Common myeloid progenitor, CD34-positive (primary cell): ENCODE measurements at regions of chr1 and their contacts with region 1.

Region 1: DNA sequence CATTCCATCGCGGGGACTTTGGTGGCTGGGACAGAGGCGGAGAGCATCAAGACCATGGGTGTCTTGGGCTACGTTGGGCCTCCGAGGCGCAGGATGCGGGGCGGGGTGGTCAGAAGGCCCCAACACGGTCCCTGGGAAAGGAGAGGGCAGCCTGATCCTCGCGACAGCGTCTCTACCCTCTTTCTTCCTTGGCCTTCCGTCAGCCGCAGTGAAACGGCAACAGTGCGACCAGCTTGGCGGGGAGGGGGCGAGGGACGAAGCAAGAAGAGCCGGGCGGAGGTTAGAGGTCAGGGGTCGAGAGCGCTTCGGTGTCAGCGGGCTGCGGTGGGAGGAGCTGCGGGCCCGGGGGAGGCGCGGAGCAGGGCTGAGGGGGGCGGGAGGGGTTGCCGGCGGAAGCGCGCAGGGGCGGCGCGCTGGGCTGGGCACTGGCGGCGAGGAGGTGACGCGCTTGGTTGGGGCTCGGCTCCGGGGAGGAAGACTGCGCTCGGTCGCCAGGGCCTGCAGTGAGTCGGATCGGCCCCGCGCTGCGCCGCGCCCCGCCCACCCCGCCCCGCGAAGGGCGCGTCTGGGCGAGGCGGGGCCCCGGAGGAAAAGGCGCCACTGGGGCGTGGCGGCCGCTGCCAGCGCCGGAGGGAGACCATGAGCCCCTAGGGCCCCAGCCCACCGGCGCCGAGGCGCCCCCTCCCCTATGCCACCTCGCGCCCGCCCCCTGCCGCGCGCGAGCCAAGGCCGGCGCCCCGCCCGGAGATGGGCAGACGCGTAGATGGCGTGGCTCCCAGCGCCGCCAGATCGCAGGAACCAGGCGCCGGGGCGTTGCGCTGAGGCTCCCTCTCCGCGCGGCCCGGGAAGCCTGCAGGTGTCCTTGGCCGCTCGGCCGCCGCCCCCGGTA is at the start of gene KCNC4:
- DNase-seq: peak; percentile 89 to 94 (median 93)
- H3K4me3 ChIP-seq: peak within 1 kb of the TSS; percentile 55 to 79 (median 67)
- H3K27ac ChIP-seq: peak within 1 kb of the TSS in 1 of 2 experiments; percentile 77
- H3K4me1 ChIP-seq: peaks cover 0 to 31% (median 23%) of the 10 kb centered on the region in 4 experiments
- H3K27me3 ChIP-seq: peaks cover 0 to 21% (median 19%) of the 10 kb centered on the region in 5 experiments

Region 2: GRCh38 chr1:109984456-109985275 is 225.3 kb before region 1 on chr1 and contains the start of gene AHCYL1:
- CTCF ChIA-PET with region 1: no interaction called
- POLR2A ChIA-PET with region 1: no interaction called
- DNase-seq: peak; percentile 98 to 99 (median 98)
- H3K4me3 ChIP-seq: peak within 1 kb of the TSS; percentile 76 to 90 (median 81)
- H3K27ac ChIP-seq: peak within 1 kb of the TSS; percentile 84 to 91
- H3K4me1 ChIP-seq: peaks cover 9 to 33% (median 17%) of the 10 kb centered on the region in 4 experiments
- H3K27me3 ChIP-seq: no peaks in the 10 kb centered on the region

Region 3: DNA sequence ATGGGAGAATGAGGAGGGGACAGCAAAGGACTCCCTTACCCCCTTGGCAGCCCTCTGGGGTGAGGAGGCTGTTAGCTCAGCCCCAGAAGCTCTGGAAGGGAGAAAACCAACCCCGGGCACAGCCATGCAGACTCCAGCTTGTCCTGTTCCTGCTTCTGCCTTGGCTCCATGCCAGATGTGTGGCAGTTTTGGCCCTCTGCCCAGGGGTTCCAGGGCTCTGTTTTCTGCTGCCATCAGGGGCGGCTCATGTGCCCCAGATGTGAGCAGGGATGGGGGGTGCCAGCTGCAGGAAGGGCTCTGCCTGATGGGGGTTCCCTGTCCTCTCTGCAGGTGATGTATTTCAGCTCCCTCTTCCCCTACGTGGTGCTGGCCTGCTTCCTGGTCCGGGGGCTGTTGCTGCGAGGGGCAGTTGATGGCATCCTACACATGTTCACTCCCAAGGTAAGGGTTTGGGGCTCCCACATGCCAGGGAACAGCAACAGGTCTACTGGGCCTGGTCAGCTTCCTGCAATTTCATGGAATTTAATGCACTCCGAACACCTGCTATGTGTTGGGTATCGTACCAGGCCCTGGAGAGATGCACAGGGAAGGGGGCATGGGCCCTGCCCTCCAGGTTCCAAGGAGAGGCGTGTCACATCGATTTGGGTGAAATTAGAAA is 33.5 kb before region 1 on chr1:
- CTCF ChIA-PET with region 1: no interaction called
- POLR2A ChIA-PET with region 1: no interaction called
- DNase-seq: peak; percentile 47 to 79 (median 78)
- H3K4me3 ChIP-seq: no peak overlapping the region
- H3K27ac ChIP-seq: no peak overlapping the region
- H3K4me1 ChIP-seq: peaks cover 0 to 10% (median 4%) of the 10 kb centered on the region in 4 experiments
- H3K27me3 ChIP-seq: peaks cover 0 to 7% (median 3%) of the 10 kb centered on the region in 5 experiments

Region 4: GRCh38 chr1:110196917-110197765 is 12.8 kb before region 1 on chr1:
- CTCF ChIA-PET with region 1: interaction called, 20 read pairs
- POLR2A ChIA-PET with region 1: no interaction called
- DNase-seq: peak; percentile 57 to 76 (median 76)
- H3K4me3 ChIP-seq: no peak overlapping the region
- H3K27ac ChIP-seq: no peak overlapping the region
- H3K4me1 ChIP-seq: no peaks in the 10 kb centered on the region
- H3K27me3 ChIP-seq: peaks cover 0 to 4% (median 0%) of the 10 kb centered on the region in 5 experiments

Region 5: DNA sequence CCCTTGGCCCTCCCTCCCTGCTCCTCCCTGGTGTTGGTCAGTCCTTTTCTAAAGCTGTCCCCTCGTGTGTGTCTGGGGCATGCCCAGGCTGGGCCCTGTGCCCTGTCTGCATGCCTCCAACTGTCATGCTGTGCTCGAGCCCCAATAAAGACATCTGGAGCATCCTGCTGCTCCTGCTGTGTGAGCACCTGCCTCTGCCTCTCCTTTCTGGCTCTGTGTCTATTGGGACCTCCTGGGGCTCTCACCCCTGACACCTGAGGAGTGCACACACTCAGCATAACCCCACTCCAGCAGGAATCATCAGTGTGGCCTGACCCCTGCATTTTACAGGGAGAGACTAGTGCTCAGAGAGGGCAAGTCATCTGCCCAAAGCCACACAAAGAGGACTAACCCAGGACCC is 23.9 kb after region 1 on chr1:
- CTCF ChIA-PET with region 1: no interaction called
- POLR2A ChIA-PET with region 1: no interaction called
- DNase-seq: no peak
- H3K4me3 ChIP-seq: no peak overlapping the region
- H3K27ac ChIP-seq: no peak overlapping the region
- H3K4me1 ChIP-seq: peaks cover 0 to 8% (median 0%) of the 10 kb centered on the region in 4 experiments
- H3K27me3 ChIP-seq: no peaks in the 10 kb centered on the region

Region 6: DNA sequence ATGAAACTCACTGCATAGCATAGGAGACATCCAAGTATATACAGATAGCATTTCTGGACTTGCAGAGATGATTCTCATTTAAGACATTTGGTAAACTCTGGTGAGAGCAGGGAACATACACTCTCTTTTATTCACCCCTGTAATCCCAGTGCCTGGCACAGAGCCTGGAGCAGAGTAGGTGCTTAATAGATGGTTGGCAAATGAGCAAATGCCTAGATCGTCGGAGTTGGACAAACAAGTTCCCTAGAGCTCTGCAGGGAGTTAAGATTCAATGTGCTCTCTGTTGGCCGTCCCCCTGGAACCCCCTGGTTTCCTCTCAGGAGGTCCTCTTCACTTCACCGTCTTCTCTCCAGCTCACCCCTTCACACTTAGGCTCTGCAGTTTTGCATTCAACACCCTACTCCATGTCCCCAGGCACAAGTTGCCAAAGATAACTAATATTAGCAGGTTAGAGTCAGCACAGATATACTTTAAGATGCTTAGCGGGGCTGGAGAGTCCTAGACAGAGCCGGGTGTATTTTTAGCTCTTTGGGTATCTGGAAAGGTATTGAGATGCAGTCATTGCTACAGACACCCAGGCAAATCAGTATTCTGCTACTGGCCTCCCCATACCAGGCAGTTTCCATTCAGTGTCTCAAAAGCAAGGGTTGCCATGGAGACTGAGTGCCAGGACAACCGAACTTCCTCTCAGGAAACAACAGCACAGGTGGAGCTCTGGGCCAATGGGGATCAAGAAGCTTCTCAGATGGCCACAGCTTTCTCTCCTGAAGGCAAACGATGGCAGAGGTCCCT is 45.2 kb after region 1 on chr1:
- CTCF ChIA-PET with region 1: interaction called, 24 read pairs
- POLR2A ChIA-PET with region 1: no interaction called
- DNase-seq: peak; percentile 48 to 88 (median 84)
- H3K4me3 ChIP-seq: no peak overlapping the region
- H3K27ac ChIP-seq: no peak overlapping the region
- H3K4me1 ChIP-seq: peaks cover 0 to 16% (median 12%) of the 10 kb centered on the region in 4 experiments
- H3K27me3 ChIP-seq: no peaks in the 10 kb centered on the region

Region 7: DNA sequence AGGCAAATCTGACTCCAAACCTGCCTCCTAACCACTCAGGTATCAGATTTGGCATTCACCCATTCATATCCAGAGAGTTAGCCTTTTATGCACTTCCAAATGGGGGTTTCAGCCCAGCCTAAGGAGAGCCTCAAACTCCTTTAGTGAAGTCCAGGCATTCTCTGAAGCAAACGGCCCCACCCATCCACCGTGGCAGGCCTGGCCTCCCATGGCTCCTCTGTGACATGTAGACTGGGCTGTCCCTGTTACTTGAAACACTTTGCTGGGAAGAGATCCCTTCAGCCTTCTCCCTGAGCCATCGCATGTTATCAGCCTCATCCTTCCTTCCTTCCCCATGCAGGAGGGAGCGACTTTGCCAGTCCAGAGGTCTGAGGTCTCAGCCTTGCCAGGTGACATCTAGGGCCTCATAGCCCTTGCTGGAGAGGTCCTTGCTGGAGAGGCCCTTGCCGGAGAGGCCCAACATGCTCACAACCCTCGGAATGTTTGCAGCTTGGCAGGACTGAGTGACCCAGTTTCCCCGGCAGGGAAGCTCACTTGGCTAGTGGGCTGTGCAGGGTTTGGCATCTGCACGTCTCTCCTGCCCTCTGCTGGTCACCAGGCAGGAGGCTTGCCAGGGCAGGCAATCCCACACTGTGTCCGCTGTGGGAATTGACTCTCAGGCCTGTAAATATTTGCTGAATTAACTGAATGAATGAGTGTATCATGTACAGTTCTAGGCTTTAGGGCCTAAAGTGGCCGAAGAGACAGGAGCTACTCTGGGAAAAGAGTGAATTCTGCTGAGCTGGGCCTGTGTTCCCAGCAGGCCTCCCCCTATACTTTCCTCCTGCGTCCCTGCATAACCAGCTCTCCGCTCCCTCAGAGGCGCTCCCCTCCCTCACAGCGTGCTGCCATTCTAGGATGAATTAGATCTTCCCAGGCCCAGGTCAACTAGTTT is 102.5 kb after region 1 on chr1:
- CTCF ChIA-PET with region 1: interaction called, 457 read pairs
- POLR2A ChIA-PET with region 1: interaction called, 5 read pairs
- DNase-seq: peak; percentile 77 to 89 (median 84)
- H3K4me3 ChIP-seq: no peak overlapping the region
- H3K27ac ChIP-seq: no peak overlapping the region
- H3K4me1 ChIP-seq: peaks cover 0 to 3% (median 0%) of the 10 kb centered on the region in 4 experiments
- H3K27me3 ChIP-seq: peaks cover 0 to 2% (median 0%) of the 10 kb centered on the region in 5 experiments

Region 8: GRCh38 chr1:110407260-110408210 is 197.6 kb after region 1 on chr1 and contains the start of gene LAMTOR5:
- CTCF ChIA-PET with region 1: interaction called, 19 read pairs
- POLR2A ChIA-PET with region 1: no interaction called
- DNase-seq: peak; percentile 95 to 97 (median 97)
- H3K4me3 ChIP-seq: peak within 1 kb of the TSS; percentile 84 to 98 (median 93)
- H3K27ac ChIP-seq: peak within 1 kb of the TSS; percentile 89 to 94
- H3K4me1 ChIP-seq: peaks cover 12 to 22% (median 14%) of the 10 kb centered on the region in 4 experiments
- H3K27me3 ChIP-seq: no peaks in the 10 kb centered on the region

Region 9: GRCh38 chr1:110460253-110461220 is 250.6 kb after region 1 on chr1:
- CTCF ChIA-PET with region 1: interaction called, 118 read pairs
- POLR2A ChIA-PET with region 1: no interaction called
- DNase-seq: peak; percentile 78 to 91 (median 86)
- H3K4me3 ChIP-seq: no peak overlapping the region
- H3K27ac ChIP-seq: no peak overlapping the region
- H3K4me1 ChIP-seq: no peaks in the 10 kb centered on the region
- H3K27me3 ChIP-seq: peaks cover 0 to 2% (median 0%) of the 10 kb centered on the region in 5 experiments